ENCODE measurements at regions of chr1 and their contacts with region 1.

Region 1: GRCh38 chr1:52404116-52404986 is at the starts of genes ORC1 and PRPF38A:
- DNase-seq: peak; percentile 99
- H3K4me3 Mint-ChIP-seq: peak within 1 kb of the TSS; percentile 100
- H3K27ac Mint-ChIP-seq: peak within 1 kb of the TSS; percentile 96
- H3K4me1 Mint-ChIP-seq: peaks cover 39% of the 10 kb centered on the region
- H3K27me3 Mint-ChIP-seq: no peaks in the 10 kb centered on the region
- total RNA-seq, gene ORC1: 42.5 to 43.0 TPM
- total RNA-seq, gene PRPF38A: 74.6 to 79.7 TPM

Region 2: DNA sequence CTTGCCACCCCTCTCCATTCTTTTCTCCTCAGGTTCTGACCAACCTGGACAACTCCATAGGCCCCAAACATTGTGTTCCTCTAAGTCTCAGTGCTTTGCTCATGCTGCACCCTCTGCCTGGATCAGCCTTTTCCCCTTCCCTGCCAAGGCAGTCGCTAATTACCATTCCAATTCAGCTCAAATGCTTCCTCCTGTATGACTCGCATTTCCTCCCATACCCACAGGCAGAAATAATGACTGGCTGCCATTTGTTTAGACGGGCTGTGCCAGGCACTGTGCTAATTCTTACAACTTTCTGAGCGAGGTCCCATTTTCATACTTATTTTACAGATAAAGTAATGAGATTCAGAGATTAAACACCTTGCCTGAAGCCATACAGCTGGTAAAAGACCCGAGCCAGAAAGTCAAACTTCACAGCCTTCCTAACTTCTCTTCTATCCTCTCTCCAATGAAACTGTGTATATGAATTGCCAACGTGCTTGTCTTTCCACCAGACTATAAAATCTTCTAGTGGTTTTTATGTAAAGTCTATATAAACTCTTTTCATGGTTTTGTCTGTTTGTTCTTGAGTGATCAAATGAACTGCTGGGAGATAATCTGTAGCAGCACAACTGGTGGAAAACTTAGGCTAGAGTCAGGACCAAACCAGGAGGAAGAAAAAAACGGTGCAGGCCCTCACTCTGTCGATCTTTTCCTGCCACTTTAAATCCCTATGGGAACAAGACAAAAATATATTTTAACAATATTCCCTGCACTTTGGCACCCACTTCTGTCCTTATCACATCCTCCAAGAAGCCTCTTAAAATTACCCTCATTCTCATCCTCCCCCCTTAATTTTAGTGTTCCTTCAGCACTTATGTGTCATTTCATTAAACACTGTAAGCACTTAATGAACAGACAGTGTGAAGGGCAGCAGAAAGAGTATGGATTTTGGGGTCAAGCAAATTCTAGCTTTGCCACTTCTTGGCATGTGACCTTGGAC is 447.5 kb before region 1 on chr1:
- CTCF ChIA-PET with region 1: no interaction called
- POLR2A ChIA-PET with region 1: no interaction called
- intact Hi-C with region 1: no loop called
- DNase-seq: no peak
- H3K4me3 Mint-ChIP-seq: no peak overlapping the region
- H3K27ac Mint-ChIP-seq: no peak overlapping the region
- H3K4me1 Mint-ChIP-seq: no peaks in the 10 kb centered on the region
- H3K27me3 Mint-ChIP-seq: no peaks in the 10 kb centered on the region

Region 3: GRCh38 chr1:52056163-52056936 is 348.0 kb before region 1 on chr1 and contains the start of gene BTF3L4:
- CTCF ChIA-PET with region 1: no interaction called
- POLR2A ChIA-PET with region 1: interaction called, 6 read pairs
- intact Hi-C with region 1: loop called (anchors 1 kb)
- DNase-seq: peak; percentile 97
- H3K4me3 Mint-ChIP-seq: peak within 1 kb of the TSS; percentile 94
- H3K27ac Mint-ChIP-seq: peak within 1 kb of the TSS; percentile 98
- H3K4me1 Mint-ChIP-seq: peaks cover 53% of the 10 kb centered on the region
- H3K27me3 Mint-ChIP-seq: no peaks in the 10 kb centered on the region
- total RNA-seq, gene BTF3L4: 32.5 to 35.2 TPM

Region 4: GRCh38 chr1:52141513-52142219 is 262.7 kb before region 1 on chr1 and contains the start of gene ZFYVE9:
- CTCF ChIA-PET with region 1: no interaction called
- POLR2A ChIA-PET with region 1: no interaction called
- intact Hi-C with region 1: loop called (anchors 5 kb)
- DNase-seq: peak; percentile 75
- H3K4me3 Mint-ChIP-seq: peak within 1 kb of the TSS; percentile 80
- H3K27ac Mint-ChIP-seq: no peak within 1 kb of the TSS
- H3K4me1 Mint-ChIP-seq: peaks cover 39% of the 10 kb centered on the region
- H3K27me3 Mint-ChIP-seq: peaks cover 3% of the 10 kb centered on the region
- total RNA-seq, gene ZFYVE9: 2.6 to 2.9 TPM

Region 5: DNA sequence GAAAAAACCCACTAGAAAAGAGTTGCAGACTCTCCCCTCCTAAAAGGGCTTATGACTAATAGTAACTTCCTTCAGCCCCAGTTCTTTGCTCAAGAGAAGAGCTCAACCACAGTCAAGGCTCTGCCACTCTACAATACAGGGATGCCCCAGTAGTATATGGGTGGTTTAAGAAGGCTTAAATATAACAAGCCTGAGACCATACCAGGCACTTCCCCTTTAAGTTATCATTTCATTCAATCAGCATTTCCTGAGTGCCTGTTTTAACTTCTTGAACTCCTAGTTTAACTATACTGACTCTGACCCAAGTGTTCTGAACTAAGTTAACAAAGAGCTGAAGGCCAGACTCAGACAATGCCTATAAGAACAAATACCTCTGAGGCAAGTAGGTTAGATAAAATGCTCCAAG is 19.9 kb after region 1 on chr1:
- CTCF ChIA-PET with region 1: interaction called, 10 read pairs
- POLR2A ChIA-PET with region 1: interaction called, 12 read pairs
- intact Hi-C with region 1: loop called (anchors 1 kb)
- DNase-seq: peak; percentile 34
- H3K4me3 Mint-ChIP-seq: peak overlapping the region; percentile 7
- H3K27ac Mint-ChIP-seq: peak overlapping the region; percentile 77
- H3K4me1 Mint-ChIP-seq: peaks cover 45% of the 10 kb centered on the region
- H3K27me3 Mint-ChIP-seq: no peaks in the 10 kb centered on the region

Region 6: DNA sequence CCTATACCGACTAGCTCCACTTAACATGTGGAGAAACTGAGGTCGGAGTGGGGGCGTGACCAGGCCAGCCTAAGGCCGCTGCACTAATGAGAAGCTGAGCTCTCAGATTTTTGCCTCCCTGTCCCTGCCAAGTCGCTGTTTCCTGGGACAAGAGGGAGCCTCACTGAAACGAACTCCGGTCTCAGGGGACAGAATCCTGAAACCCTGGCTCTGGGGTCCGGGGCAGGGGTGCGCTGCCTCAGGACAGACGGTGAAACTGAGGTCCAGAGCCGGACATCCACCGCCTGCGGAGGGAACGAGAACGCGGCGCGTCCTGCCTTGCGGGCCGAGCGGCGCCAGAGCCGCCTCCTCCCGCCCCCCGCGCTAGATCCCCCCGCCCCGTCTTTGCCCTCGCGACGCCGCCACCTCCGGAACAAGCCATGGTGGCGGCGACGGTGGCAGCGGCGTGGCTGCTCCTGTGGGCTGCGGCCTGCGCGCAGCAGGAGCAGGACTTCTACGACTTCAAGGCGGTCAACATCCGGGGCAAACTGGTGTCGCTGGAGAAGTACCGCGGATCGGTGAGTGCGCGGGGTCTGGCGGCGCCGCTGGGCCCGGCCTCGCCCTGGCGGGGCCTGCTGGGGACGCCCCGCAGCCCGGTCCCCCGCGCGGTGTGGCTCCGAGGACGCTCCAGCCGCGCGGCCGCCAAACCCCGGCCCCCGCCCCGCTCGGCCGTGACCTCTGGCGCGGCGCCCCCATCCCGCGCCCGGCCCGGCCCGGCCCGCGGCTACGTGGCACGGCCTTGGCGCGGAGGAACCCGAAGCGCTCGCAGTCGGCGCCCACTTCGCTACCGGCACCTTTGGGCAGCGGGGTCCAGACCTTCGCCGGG is 197.9 kb after region 1 on chr1 and contains the start of gene GPX7:
- CTCF ChIA-PET with region 1: no interaction called
- POLR2A ChIA-PET with region 1: interaction called, 5 read pairs
- intact Hi-C with region 1: loop called (anchors 1 kb)
- DNase-seq: peak; percentile 65
- H3K4me3 Mint-ChIP-seq: peak within 1 kb of the TSS; percentile 91
- H3K27ac Mint-ChIP-seq: peak within 1 kb of the TSS; percentile 90
- H3K4me1 Mint-ChIP-seq: peaks cover 40% of the 10 kb centered on the region
- H3K27me3 Mint-ChIP-seq: no peaks in the 10 kb centered on the region
- total RNA-seq, gene GPX7: 19.9 to 20.6 TPM

Region 7: DNA sequence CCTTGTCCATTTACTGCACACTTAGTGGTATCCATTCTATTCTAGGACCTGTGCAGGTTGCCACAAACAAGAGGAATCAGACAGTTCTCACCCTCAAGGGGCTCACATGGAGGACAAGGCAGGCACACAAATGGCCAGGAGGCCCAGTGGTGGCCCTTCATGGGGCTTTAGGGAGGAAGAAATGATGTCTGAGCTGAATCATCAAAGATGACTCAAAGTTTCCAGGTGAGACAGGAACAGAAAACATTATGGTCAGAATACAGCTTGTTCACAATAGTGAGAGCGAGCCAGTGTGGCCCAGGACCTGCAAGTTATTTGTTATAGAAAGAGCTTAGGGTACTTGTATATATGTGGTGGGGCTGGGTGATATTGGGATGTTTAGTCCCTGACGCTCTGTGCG is 255.0 kb after region 1 on chr1:
- CTCF ChIA-PET with region 1: no interaction called
- POLR2A ChIA-PET with region 1: interaction called, 3 read pairs
- intact Hi-C with region 1: loop called (anchors 2 kb)
- DNase-seq: peak; percentile 66
- H3K4me3 Mint-ChIP-seq: peak overlapping the region; percentile 46
- H3K27ac Mint-ChIP-seq: peak overlapping the region; percentile 85
- H3K4me1 Mint-ChIP-seq: peaks cover 21% of the 10 kb centered on the region
- H3K27me3 Mint-ChIP-seq: no peaks in the 10 kb centered on the region

Region 8: DNA sequence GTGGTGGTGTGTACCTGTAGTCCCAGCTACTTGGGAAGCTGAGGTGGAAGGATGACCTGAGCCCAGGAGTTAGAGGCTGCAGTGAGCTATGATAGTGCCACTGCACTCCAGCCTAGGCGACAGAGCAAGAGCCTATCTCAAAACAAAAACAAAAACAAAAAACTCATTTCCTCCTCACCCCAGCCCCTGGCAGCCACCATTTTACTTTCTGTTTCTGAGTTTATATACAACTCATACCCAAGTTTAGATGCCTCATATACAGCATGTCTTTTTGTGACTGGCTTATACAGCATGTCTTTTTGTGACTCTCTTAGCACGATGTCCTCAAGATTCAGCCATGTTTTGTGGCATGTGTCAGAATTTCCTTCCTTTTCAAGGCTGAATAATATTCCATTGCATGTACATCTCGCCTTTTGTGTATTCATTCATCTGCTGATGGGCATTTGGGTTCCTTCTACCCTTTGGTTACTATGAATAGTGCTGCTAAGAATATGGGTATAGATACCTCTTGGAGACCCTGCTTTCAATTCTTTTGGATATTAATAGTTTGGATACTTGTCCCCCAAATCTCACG is 279.1 kb after region 1 on chr1:
- CTCF ChIA-PET with region 1: interaction called, 40 read pairs
- POLR2A ChIA-PET with region 1: interaction called, 9 read pairs
- intact Hi-C with region 1: loop called (anchors 1 kb)
- DNase-seq: no peak
- H3K4me3 Mint-ChIP-seq: no peak overlapping the region
- H3K27ac Mint-ChIP-seq: peak overlapping the region; percentile 28
- H3K4me1 Mint-ChIP-seq: peaks cover 6% of the 10 kb centered on the region
- H3K27me3 Mint-ChIP-seq: no peaks in the 10 kb centered on the region